ENCODE measurements at regions of chr14 and their contacts with region 1.

Region 1: GRCh38 chr14:38867561-38868150 is 235.4 kb downstream of the SEC23A start:
- H3K4me3 Mint-ChIP-seq: no peak overlapping the region
- H3K27ac Mint-ChIP-seq: no peak overlapping the region
- H3K4me1 Mint-ChIP-seq: peaks cover 12% of the 10 kb centered on the region
- H3K27me3 Mint-ChIP-seq: no peaks in the 10 kb centered on the region

Region 2: DNA sequence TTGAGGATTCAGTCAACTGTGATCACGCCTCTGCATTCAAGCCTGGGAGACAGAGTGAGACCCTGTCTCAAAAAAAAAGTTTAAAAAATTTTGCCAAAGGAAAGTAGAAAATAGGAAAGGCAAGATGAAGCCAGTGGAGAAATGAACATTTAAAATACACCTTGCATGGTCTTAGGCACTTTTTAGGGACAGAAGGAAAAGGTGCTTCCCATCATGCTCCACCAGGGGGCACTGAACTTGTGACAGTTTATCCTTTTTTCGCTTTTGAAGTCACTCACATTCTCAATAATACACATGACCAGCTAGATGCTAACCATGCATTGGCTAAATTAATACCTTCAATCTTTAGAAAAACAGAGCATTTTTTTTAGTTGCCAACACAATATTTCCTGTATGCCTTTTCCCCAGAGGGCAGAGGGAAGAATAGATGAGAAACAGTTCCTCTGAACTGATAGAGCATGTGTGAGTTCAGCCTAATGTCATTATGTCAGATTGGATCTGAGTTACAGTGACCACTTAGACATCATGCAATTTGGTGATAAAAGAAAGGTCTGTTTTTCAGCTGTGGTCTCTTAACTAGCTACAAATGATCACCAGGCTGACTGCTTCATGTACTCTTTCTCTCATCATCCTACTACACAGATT is 881.7 kb before region 1 on chr14:
- intact Hi-C with region 1: loop called (anchors 5 kb)
- H3K4me3 Mint-ChIP-seq: no peak overlapping the region
- H3K27ac Mint-ChIP-seq: no peak overlapping the region
- H3K4me1 Mint-ChIP-seq: no peaks in the 10 kb centered on the region
- H3K27me3 Mint-ChIP-seq: no peaks in the 10 kb centered on the region

Region 3: DNA sequence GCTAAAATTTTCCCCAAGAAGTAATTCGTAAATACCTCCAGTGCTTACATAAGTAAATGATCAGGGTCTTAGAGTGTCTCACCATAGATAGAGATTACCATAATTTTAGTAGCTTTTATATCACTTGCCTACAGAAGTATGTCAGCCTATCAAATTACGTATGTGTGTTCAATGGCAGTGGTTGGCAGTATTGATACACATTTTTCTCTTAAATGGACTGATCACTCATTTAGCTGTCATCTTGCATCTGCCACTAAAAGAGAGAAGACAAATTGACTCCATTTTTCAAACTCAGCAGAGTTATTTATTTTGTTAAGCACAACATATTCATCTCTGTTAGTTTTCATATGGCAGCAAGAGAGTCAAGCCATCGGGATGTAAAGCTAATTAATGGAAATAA is 198.6 kb before region 1 on chr14:
- intact Hi-C with region 1: no loop called
- H3K4me3 Mint-ChIP-seq: no peak overlapping the region
- H3K27ac Mint-ChIP-seq: no peak overlapping the region
- H3K4me1 Mint-ChIP-seq: no peaks in the 10 kb centered on the region
- H3K27me3 Mint-ChIP-seq: no peaks in the 10 kb centered on the region

Region 4: GRCh38 chr14:38721822-38722431 is 145.7 kb before region 1 on chr14:
- intact Hi-C with region 1: loop called (anchors 1 kb)
- H3K4me3 Mint-ChIP-seq: no peak overlapping the region
- H3K27ac Mint-ChIP-seq: no peak overlapping the region
- H3K4me1 Mint-ChIP-seq: no peaks in the 10 kb centered on the region
- H3K27me3 Mint-ChIP-seq: no peaks in the 10 kb centered on the region

Region 5: GRCh38 chr14:39107591-39107996 is 239.9 kb after region 1 on chr14:
- intact Hi-C with region 1: no loop called
- H3K4me3 Mint-ChIP-seq: no peak overlapping the region
- H3K27ac Mint-ChIP-seq: no peak overlapping the region
- H3K4me1 Mint-ChIP-seq: peaks cover 11% of the 10 kb centered on the region
- H3K27me3 Mint-ChIP-seq: peaks cover 3% of the 10 kb centered on the region